ENCODE measurements at regions of chr11 and their contacts with region 1.

Region 1: GRCh38 chr11:75204685-75205563 is 35.6 kb upstream of the TPBGL start:
- DNase-seq: peak; percentile 59
- H3K4me3 ChIP-seq: no peak overlapping the region
- H3K27ac ChIP-seq: no peak overlapping the region
- H3K4me1 ChIP-seq: no peaks in the 10 kb centered on the region
- H3K27me3 ChIP-seq: no peaks in the 10 kb centered on the region
- CTCF ChIP-seq: peak; percentile 45 to 79 (median 76)
- POLR2A ChIP-seq: no peak

Region 2: GRCh38 chr11:75142714-75143419 is 62.1 kb before region 1 on chr11:
- intact Hi-C with region 1: loop called (anchors 2 kb)
- DNase-seq: no peak
- H3K4me3 ChIP-seq: no peak overlapping the region
- H3K27ac ChIP-seq: no peak overlapping the region
- H3K4me1 ChIP-seq: no peaks in the 10 kb centered on the region
- H3K27me3 ChIP-seq: no peaks in the 10 kb centered on the region
- CTCF ChIP-seq: no peak
- POLR2A ChIP-seq: no peak

Measured in prostate gland (tissue), 2 donors.